IMR-90 (cell line): ENCODE measurements at regions of chr12 and their contacts with region 1.

Region 1: GRCh38 chr12:49088190-49088931 is 6.2 kb downstream of the DHH start:
- DNase-seq: peak; percentile 94
- ATAC-seq: peak; percentile 92
- H3K4me3 ChIP-seq: no peak overlapping the region
- H3K27ac ChIP-seq: no peak overlapping the region
- H3K4me1 ChIP-seq: peaks cover 9% of the 10 kb centered on the region
- H3K27me3 ChIP-seq: peaks cover 15% of the 10 kb centered on the region; the same call in 1 of the 2 replicates
- CTCF ChIP-seq: peak; percentile 90
- POLR2A ChIP-seq: no peak
- RAD21 ChIP-seq: peak; percentile 75

Region 2: GRCh38 chr12:48851883-48852733 is 236.3 kb before region 1 on chr12 and contains the start of gene DDX23:
- CTCF ChIA-PET with region 1: no interaction called
- POLR2A ChIA-PET with region 1: no interaction called
- dilution Hi-C with region 1: no loop called
- in situ Hi-C with region 1: no loop called
- intact Hi-C with region 1: no loop called
- DNase-seq: peak; percentile 97
- ATAC-seq: peak; percentile 98
- H3K4me3 ChIP-seq: peak within 1 kb of the TSS; percentile 78
- H3K27ac ChIP-seq: peak within 1 kb of the TSS; percentile 90
- H3K4me1 ChIP-seq: peaks cover 6% of the 10 kb centered on the region
- H3K27me3 ChIP-seq: peaks cover 6% of the 10 kb centered on the region; the same call in 1 of the 2 replicates
- CTCF ChIP-seq: no peak
- POLR2A ChIP-seq: peak; percentile 68; the same call in 1 of the 2 replicates
- RAD21 ChIP-seq: no peak
- total RNA-seq, gene DDX23: 81.9 and 92.5 TPM in 2 replicates

Region 3: DNA sequence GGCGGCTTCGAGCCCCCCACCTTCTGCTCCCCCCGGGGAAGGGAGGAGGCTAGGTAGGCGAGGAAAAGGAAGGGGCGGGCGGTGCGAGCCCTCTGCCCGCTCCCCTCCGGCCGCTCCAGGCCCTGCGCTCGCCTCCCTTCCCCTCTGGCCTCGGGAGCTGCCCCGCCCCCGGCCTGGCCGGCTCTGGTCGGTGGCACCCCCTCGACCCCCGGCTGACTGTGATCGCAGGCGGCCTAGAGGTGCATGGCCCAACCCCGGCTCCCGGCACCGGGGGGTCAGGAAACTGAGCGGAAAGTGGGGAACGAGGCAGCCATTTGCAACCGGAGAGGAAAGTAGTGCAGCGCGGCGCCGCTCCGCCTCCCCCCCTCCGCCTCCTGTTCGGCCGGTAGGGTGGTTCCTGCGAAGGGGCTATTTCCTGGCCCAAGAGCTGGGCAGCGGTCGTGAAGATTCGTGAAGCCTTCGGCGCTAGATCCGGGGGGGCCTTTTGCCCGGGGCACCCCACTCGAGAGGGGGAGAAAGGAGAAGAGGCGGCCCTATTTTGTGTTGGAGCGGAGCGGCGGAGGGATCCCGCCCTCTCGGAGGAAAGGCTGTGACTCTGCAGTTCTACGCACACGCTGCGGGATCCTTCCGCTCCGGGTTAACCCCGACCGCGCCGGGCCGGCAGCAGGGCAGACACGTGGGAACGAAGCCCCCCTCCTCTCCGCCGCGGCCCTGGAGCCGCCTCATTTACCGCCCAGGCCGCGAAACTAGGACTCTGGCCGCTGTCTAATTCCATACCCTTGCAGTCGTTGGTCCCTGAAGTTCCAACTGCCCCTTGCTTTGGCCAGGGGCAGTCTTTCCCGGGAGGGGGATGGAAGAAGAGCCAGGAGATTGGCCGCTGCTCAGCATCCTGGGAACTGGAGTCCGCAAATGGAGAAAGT is 27.9 kb before region 1 on chr12 and contains the start of gene KMT2D:
- CTCF ChIA-PET with region 1: interaction called, 5 read pairs
- POLR2A ChIA-PET with region 1: no interaction called
- dilution Hi-C with region 1: no loop called
- in situ Hi-C with region 1: no loop called
- intact Hi-C with region 1: loop called (anchors 2 kb)
- DNase-seq: peak; percentile 96
- ATAC-seq: peak; percentile 74
- H3K4me3 ChIP-seq: peak within 1 kb of the TSS; percentile 81
- H3K27ac ChIP-seq: peak within 1 kb of the TSS; percentile 98
- H3K4me1 ChIP-seq: peaks cover 7% of the 10 kb centered on the region
- H3K27me3 ChIP-seq: no peaks in the 10 kb centered on the region
- CTCF ChIP-seq: 0 out of 2 replicates have a peak, but pooled peaks have one; percentile 1
- POLR2A ChIP-seq: peak; percentile 48; the same call in 1 of the 2 replicates
- RAD21 ChIP-seq: no peak
- total RNA-seq, gene KMT2D: 6.6 and 10.0 TPM in 2 replicates

Region 4: GRCh38 chr12:49069507-49070346 is 18.6 kb before region 1 on chr12 and contains the start of gene RHEBL1:
- CTCF ChIA-PET with region 1: interaction called, 16 read pairs
- POLR2A ChIA-PET with region 1: no interaction called
- dilution Hi-C with region 1: no loop called
- in situ Hi-C with region 1: no loop called
- intact Hi-C with region 1: loop called (anchors 2 kb)
- DNase-seq: peak; percentile 92
- ATAC-seq: peak; percentile 100
- H3K4me3 ChIP-seq: peak within 1 kb of the TSS; percentile 76
- H3K27ac ChIP-seq: no peak within 1 kb of the TSS
- H3K4me1 ChIP-seq: no peaks in the 10 kb centered on the region; the same call in 1 of the 2 replicates
- H3K27me3 ChIP-seq: no peaks in the 10 kb centered on the region
- CTCF ChIP-seq: 0 out of 2 replicates have a peak, but pooled peaks have one; percentile 10
- POLR2A ChIP-seq: no peak
- RAD21 ChIP-seq: no peak
- total RNA-seq, gene RHEBL1: 0.56 and 0.72 TPM in 2 replicates

Region 5: GRCh38 chr12:49121047-49121696 is 32.8 kb after region 1 on chr12:
- CTCF ChIA-PET with region 1: interaction called, 8 read pairs
- POLR2A ChIA-PET with region 1: interaction called, 4 read pairs
- dilution Hi-C with region 1: no loop called
- in situ Hi-C with region 1: no loop called
- intact Hi-C with region 1: loop called (anchors 1 kb)
- DNase-seq: peak; percentile 71
- ATAC-seq: peak; percentile 97
- H3K4me3 ChIP-seq: no peak overlapping the region
- H3K27ac ChIP-seq: no peak overlapping the region
- H3K4me1 ChIP-seq: 0 out of 2 replicates have a peak, but pooled peaks cover 1% of the 10 kb centered on the region
- H3K27me3 ChIP-seq: no peaks in the 10 kb centered on the region
- CTCF ChIP-seq: peak; percentile 71
- POLR2A ChIP-seq: no peak
- RAD21 ChIP-seq: peak; percentile 71

Region 6: DNA sequence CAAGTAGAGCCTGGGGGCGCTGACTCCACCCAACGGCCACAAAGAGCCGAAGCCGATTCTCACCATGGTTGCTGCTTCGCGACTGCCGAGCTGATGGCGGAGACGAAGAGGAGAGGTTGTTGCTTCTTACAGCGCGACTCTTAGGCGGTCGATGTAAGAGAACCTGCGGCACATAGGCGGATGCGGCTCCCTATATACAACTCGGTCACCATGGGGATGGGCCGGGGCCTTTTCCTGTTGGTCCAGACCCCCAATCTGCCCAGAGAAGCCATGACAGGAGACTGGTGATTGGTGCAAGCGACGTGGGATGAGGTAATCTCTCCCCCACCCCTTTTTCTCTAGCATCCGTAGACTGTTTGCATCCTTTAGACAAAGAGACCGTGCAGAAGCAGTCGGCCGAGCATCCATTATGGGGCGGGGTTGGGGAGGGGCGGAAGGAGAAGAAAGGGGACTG is 100.6 kb after region 1 on chr12 and contains the start of gene TUBA1A:
- CTCF ChIA-PET with region 1: no interaction called
- POLR2A ChIA-PET with region 1: no interaction called
- dilution Hi-C with region 1: no loop called
- in situ Hi-C with region 1: no loop called
- intact Hi-C with region 1: loop called (anchors 10 kb)
- DNase-seq: peak; percentile 100
- ATAC-seq: peak; percentile 94
- H3K4me3 ChIP-seq: peak within 1 kb of the TSS; percentile 67
- H3K27ac ChIP-seq: peak within 1 kb of the TSS; percentile 66
- H3K4me1 ChIP-seq: no peaks in the 10 kb centered on the region; the same call in 1 of the 2 replicates
- H3K27me3 ChIP-seq: no peaks in the 10 kb centered on the region
- CTCF ChIP-seq: no peak
- POLR2A ChIP-seq: peak; percentile 99
- RAD21 ChIP-seq: no peak
- total RNA-seq, gene TUBA1A: 2,389 and 2,832 TPM in 2 replicates

Region 7: DNA sequence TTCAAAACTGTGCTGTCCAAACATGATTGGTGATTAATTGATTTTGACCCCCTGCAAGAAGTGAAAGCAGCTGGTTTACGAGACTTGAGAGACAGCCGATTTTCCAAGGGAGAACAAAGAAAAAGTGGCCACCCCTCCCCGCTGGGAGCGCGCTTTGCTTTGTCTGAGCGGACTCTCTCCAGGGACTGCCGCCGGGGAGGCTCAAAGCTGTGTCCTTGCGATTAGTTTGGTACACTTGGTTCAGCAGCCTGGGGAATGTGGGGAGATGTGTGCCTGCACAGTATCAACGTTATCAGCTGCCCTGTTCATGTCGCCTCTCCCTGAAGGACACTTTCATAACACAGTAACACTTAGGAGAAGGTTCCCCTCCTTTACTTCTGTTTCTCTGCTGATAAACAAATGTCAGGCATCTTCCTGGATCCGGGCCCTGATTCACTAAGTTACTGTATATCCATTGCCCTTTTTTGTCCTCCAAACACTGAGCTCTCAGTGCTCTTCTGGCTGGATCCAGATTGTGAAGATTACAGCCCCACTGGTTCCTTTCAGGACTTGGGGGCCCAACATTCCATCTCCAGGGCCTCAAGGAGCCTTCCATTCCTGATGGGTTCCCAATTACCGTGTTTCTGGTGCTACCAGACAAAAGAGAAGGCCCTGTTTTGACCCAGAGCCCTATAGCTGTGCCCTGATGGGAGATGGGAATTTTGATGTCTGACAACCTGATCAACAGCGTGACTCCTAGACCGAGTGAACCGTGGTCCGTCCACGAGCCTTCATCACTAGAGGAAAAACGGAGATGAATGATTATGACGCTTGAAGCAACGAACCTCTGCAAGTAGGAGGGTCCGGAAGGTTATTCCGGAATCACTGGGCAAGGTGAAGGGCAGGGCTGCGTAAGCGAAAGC is 144.8 kb after region 1 on chr12:
- CTCF ChIA-PET with region 1: interaction called, 4 read pairs
- POLR2A ChIA-PET with region 1: no interaction called
- dilution Hi-C with region 1: no loop called
- in situ Hi-C with region 1: no loop called
- intact Hi-C with region 1: loop called (anchors 1 kb)
- DNase-seq: peak; percentile 56
- ATAC-seq: peak; percentile 68
- H3K4me3 ChIP-seq: peak overlapping the region; percentile 25
- H3K27ac ChIP-seq: peak overlapping the region; percentile 88
- H3K4me1 ChIP-seq: peaks cover 16% of the 10 kb centered on the region
- H3K27me3 ChIP-seq: no peaks in the 10 kb centered on the region
- CTCF ChIP-seq: peak; percentile 29; the same call in 1 of the 2 replicates
- POLR2A ChIP-seq: no peak
- RAD21 ChIP-seq: peak; percentile 25; the same call in 1 of the 2 replicates